GM10248 (cell line): ENCODE measurements at regions of chr22 and their contacts with region 1.

Region 1: GRCh38 chr22:40533712-40534378 is 102.7 kb downstream of the MRTFA start:
- DNase-seq: peak; percentile 70
- CTCF ChIP-seq: no peak

Region 2: GRCh38 chr22:40410317-40410716 is 123.5 kb before region 1 on chr22:
- CTCF ChIA-PET with region 1: no interaction called
- POLR2A ChIA-PET with region 1: no interaction called
- DNase-seq: no peak
- CTCF ChIP-seq: no peak

Region 3: DNA sequence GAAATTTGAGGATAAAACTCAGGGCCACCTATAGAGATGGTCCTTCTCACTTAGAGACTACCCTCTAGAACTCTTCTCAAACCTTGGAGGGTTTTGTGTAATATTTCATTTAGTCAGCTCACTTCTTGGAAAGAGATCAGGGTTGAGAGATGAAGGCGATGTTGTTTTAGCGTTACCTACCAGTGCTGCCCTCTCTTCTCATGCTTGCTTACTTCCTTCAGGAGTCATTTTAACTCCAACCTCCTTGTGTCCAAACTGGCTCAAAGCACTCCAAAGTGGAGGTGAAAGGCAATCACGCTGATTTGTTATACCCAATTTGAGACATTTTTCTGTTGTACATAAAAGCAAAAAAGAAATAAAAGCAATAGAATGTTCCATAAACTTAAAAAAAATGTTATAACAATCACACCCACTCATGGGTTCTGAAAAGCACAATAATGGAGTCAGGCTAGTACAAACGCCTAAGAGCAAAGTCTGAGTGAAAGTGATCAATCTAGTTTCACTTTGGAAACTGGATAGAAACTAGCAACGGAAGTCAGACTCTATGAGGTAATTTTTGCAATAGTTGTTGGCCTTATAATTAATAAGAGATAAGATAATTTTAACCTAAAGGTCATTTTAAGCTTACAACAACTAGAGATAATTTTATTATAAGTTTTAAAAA is 14.4 kb before region 1 on chr22:
- CTCF ChIA-PET with region 1: interaction called, 32 read pairs
- POLR2A ChIA-PET with region 1: no interaction called
- DNase-seq: peak; percentile 67
- CTCF ChIP-seq: no peak